Activated naive CD4-positive, alpha-beta T cell treated with anti-CD3 and anti-CD28 coated beads for 36 hours (primary cell): ENCODE measurements at regions of chr19 and their contacts with region 1.

Region 1: DNA sequence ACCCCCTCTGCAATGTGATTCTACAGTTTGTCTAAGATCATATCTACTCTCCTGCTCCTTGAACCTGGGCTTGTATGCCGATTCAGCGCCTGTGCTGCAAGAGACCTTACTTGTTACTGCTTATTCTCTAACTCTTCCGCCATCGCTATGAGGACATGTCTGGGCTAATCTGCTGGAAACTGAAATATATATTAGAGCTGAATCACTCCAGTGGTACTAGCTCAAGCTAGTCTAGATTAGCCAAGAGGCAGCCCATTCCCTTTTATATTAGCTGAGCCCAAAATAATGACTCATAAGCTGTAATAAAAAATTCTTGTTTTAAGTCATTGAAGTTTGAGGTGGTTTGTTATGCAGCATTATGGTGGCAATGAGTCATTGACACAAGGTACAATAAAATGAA is 52.8 kb downstream of the SLC6A16 start:
- DNase-seq: peak; percentile 22
- H3K4me3 Mint-ChIP-seq: no peak overlapping the region
- H3K27ac Mint-ChIP-seq: peak overlapping the region; percentile 20
- H3K4me1 Mint-ChIP-seq: peaks cover 10% of the 10 kb centered on the region
- H3K27me3 Mint-ChIP-seq: peaks cover 4% of the 10 kb centered on the region

Region 2: DNA sequence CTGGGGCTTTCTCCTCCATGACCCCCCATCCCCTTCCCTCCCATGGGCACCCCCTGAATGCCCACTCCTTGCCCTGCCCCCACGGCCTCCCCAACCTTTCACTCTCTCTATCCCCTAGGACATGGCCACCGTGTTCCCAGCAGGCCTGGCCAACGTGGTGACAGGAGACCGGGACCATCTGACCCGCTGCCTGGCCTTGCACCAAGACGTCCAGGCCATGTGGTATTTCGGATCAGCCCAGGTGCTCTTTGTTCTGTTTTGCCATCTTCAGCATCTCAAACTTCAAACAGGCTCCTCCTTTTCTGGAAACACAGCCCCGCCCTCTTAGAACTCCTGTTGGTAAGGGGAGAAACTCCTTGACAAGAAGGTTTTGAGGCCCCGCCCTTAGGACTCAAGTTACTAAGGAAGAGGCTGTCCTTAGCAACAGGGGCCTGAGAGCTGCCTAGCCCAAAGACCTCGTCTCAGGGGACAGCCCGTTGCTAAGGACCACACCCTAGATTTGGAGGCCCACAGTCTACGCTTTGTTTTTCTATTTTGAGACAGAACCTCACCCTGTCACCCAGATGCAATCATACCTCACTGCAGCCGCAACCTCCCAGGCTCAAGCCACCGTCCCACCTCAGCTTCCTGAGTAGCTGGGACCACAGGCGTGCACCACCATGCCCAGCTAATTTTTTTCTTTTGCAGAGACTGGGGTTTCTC is 196.7 kb after region 1 on chr19:
- CTCF ChIA-PET with region 1: interaction called, 6 read pairs
- intact Hi-C with region 1: loop called (anchors 2 kb)
- DNase-seq: peak; percentile 90
- H3K4me3 Mint-ChIP-seq: peak overlapping the region; percentile 43
- H3K27ac Mint-ChIP-seq: peak overlapping the region; percentile 96
- H3K4me1 Mint-ChIP-seq: peaks cover 48% of the 10 kb centered on the region
- H3K27me3 Mint-ChIP-seq: no peaks in the 10 kb centered on the region